Aorta (tissue), 5 donors: ENCODE measurements at regions of chr17 and their contacts with region 1.

Region 1: GRCh38 chr17:75046582-75047289 is at the starts of genes ATP5PD and KCTD2:
- DNase-seq: peak; percentile 98
- ATAC-seq: peak; percentile 100
- H3K4me3 ChIP-seq: peak within 1 kb of the TSS; percentile 96 to 99
- H3K27ac ChIP-seq: peak within 1 kb of the TSS; percentile 47 to 99
- H3K4me1 ChIP-seq: peaks cover 0 to 2% of the 10 kb centered on the region in 2 donors
- H3K27me3 ChIP-seq: no peaks in the 10 kb centered on the region
- total RNA-seq, gene ATP5PD: 136 to 149 TPM
- total RNA-seq, gene KCTD2: 21.4 to 26.4 TPM

Region 2: GRCh38 chr17:74987909-74988711 is 58.6 kb before region 1 on chr17:
- intact Hi-C with region 1: no loop called
- DNase-seq: peak; percentile 92 to 95
- ATAC-seq: peak; percentile 92
- H3K4me3 ChIP-seq: peak overlapping the region; percentile 58 to 80
- H3K27ac ChIP-seq: peak overlapping the region; percentile 76 to 89
- H3K4me1 ChIP-seq: no peaks in the 10 kb centered on the region
- H3K27me3 ChIP-seq: no peaks in the 10 kb centered on the region

Region 3: GRCh38 chr17:75077496-75078283 is 31.0 kb after region 1 on chr17:
- intact Hi-C with region 1: loop called in 1 of 2 experiments (anchors 1 kb)
- DNase-seq: peak; percentile 85 to 91
- ATAC-seq: peak; percentile 83
- H3K4me3 ChIP-seq: no peak overlapping the region
- H3K27ac ChIP-seq: peak overlapping the region in 1 of 2 donors; percentile 60
- H3K4me1 ChIP-seq: no peaks in the 10 kb centered on the region
- H3K27me3 ChIP-seq: no peaks in the 10 kb centered on the region

Region 4: GRCh38 chr17:75273977-75274708 is 227.4 kb after region 1 on chr17:
- intact Hi-C with region 1: no loop called
- DNase-seq: peak in 1 of 2 donors; percentile 76
- ATAC-seq: no peak
- H3K4me3 ChIP-seq: no peak overlapping the region
- H3K27ac ChIP-seq: no peak overlapping the region
- H3K4me1 ChIP-seq: peaks cover 0 to 3% of the 10 kb centered on the region in 2 donors
- H3K27me3 ChIP-seq: no peaks in the 10 kb centered on the region